MCF 10A (cell line): ENCODE measurements at regions of chr5 and their contacts with region 1.

Region 1: GRCh38 chr5:151126199-151126645 is 31.4 kb downstream of the ANXA6 start:
- DNase-seq: peak; percentile 76
- H3K4me3 Mint-ChIP-seq: no peak overlapping the region
- H3K27ac Mint-ChIP-seq: no peak overlapping the region
- H3K4me1 Mint-ChIP-seq: peaks cover 12% of the 10 kb centered on the region
- H3K27me3 Mint-ChIP-seq: peaks cover 21% of the 10 kb centered on the region
- CTCF ChIP-seq: peak; percentile 91

Region 2: GRCh38 chr5:150945947-150946346 is 180.3 kb before region 1 on chr5:
- CTCF ChIA-PET with region 1: no interaction called
- POLR2A ChIA-PET with region 1: no interaction called
- intact Hi-C with region 1: no loop called
- DNase-seq: no peak
- H3K4me3 Mint-ChIP-seq: no peak overlapping the region
- H3K27ac Mint-ChIP-seq: no peak overlapping the region
- H3K4me1 Mint-ChIP-seq: no peaks in the 10 kb centered on the region
- H3K27me3 Mint-ChIP-seq: no peaks in the 10 kb centered on the region
- CTCF ChIP-seq: no peak

Region 3: GRCh38 chr5:151002250-151002649 is 124.0 kb before region 1 on chr5:
- CTCF ChIA-PET with region 1: interaction called, 18 read pairs
- POLR2A ChIA-PET with region 1: no interaction called
- intact Hi-C with region 1: no loop called
- DNase-seq: peak; percentile 77
- H3K4me3 Mint-ChIP-seq: no peak overlapping the region
- H3K27ac Mint-ChIP-seq: no peak overlapping the region
- H3K4me1 Mint-ChIP-seq: no peaks in the 10 kb centered on the region
- H3K27me3 Mint-ChIP-seq: no peaks in the 10 kb centered on the region
- CTCF ChIP-seq: peak; percentile 79

Region 4: DNA sequence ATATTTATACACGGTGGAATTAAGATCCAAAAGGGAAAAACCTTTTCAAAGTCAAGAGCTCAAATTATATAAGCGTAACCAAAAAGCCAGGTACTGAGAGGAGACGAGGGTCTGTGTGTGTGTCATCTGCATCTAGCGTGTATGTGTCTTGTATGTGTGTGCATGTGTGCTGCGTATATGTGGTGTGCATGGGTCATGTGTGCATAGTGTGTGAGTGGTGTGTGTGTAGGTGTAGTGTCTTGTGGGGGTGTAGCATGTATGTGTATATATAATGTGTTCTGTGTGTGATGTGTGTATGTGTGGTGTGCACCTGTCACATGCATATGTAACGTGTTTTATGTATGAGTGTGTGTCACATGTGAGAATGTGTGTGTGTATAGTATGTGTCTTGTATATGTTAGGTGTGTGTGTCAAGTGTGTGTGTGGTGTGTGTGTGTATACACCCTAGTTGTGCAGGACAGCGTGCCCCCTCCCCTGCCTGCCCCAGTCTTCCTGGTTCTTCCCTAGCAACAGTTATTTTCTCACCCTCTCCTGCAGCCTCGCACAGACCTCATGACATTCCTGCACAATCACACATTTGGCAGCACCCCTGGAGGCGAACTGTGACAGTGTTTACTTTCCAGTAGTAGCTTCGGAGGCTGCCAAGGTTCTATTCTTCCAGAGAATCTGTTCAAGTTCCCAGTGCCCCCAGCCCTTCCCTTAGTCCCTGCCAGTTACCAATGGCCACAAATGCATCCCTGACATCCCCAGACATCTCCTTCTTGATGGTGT is 18.3 kb before region 1 on chr5:
- CTCF ChIA-PET with region 1: interaction called, 26 read pairs
- POLR2A ChIA-PET with region 1: no interaction called
- intact Hi-C with region 1: no loop called
- DNase-seq: peak; percentile 76
- H3K4me3 Mint-ChIP-seq: no peak overlapping the region
- H3K27ac Mint-ChIP-seq: no peak overlapping the region
- H3K4me1 Mint-ChIP-seq: peaks cover 36% of the 10 kb centered on the region
- H3K27me3 Mint-ChIP-seq: no peaks in the 10 kb centered on the region
- CTCF ChIP-seq: no peak

Region 5: GRCh38 chr5:151157426-151158286 is 31.4 kb after region 1 on chr5 and contains the start of gene ANXA6:
- CTCF ChIA-PET with region 1: interaction called, 745 read pairs
- POLR2A ChIA-PET with region 1: interaction called, 4 read pairs
- intact Hi-C with region 1: no loop called
- DNase-seq: peak; percentile 81
- H3K4me3 Mint-ChIP-seq: peak within 1 kb of the TSS; percentile 64
- H3K27ac Mint-ChIP-seq: no peak within 1 kb of the TSS
- H3K4me1 Mint-ChIP-seq: peaks cover 9% of the 10 kb centered on the region
- H3K27me3 Mint-ChIP-seq: peaks cover 37% of the 10 kb centered on the region
- CTCF ChIP-seq: no peak
- total RNA-seq, gene ANXA6: 2.6 TPM in 2 replicates

Region 6: DNA sequence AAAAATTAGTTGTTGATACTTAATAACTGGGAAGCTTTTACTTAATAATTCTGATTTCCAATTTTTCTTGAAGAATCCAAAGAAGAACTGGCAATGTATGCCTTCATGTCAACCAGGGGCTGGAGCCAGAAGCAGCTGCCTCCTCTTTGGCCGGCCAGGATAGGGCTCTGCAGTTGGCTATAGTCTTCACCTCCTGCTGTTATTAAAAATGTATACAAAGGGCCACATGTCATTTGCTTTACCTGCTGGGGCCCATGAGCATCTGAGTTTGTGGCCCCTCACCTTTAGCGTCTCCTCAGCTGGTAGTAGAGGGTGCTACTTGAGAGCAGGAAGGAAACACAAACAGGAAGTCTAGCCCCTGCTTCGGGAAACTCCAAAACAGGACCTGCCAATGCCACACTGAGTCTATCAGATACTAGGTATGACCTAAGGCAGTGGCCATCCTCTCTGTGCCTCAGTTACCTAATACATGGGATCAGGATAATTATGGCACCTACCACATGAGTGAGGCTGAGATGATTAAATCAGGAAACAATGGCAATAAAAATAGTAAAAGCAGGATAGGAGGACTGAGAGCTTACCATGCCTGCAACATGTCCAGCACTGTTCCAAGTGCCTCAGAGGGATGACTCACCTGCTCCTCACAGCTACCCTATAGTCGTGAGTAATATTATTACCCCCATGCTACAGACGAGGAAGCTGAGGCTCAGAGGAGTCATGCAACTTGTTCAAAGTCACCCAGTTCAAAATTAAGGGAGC is 76.3 kb after region 1 on chr5:
- CTCF ChIA-PET with region 1: interaction called, 13 read pairs
- POLR2A ChIA-PET with region 1: no interaction called
- intact Hi-C with region 1: no loop called
- DNase-seq: peak; percentile 99
- H3K4me3 Mint-ChIP-seq: no peak overlapping the region
- H3K27ac Mint-ChIP-seq: no peak overlapping the region
- H3K4me1 Mint-ChIP-seq: peaks cover 11% of the 10 kb centered on the region
- H3K27me3 Mint-ChIP-seq: no peaks in the 10 kb centered on the region
- CTCF ChIP-seq: no peak

Region 7: DNA sequence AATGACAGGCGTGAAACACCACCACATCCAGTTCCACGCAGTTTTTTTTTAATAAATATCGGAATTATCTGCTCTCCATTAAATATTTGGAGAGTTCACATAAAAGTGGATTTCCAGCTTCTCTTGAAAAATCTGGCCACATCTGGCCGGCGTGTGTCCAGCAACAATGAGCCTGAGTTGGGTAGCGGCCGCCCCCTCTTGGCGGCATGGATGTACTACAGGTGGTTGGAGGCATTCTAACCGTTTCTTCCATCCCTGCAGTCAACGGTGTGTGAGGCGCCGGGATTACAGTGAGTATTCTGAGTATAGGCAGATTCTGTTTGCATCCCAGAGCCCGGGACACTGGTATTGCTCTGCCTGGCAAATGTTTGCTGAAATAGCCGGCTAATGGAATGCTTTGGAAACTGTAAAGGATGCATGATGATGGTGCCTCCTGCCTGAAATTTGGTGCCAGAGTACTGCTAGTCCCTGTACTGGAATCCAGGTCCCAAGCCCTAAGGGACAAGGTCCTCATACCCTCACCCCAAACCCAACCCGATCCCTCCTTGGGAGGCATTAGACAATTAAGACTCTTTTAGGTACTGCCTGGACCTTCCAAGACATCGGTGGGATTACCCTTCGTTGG is 113.1 kb after region 1 on chr5:
- CTCF ChIA-PET with region 1: interaction called, 338 read pairs
- POLR2A ChIA-PET with region 1: interaction called, 13 read pairs
- intact Hi-C with region 1: loop called (anchors 1 kb)
- DNase-seq: peak; percentile 83
- H3K4me3 Mint-ChIP-seq: no peak overlapping the region
- H3K27ac Mint-ChIP-seq: peak overlapping the region; percentile 20
- H3K4me1 Mint-ChIP-seq: peaks cover 4% of the 10 kb centered on the region
- H3K27me3 Mint-ChIP-seq: no peaks in the 10 kb centered on the region
- CTCF ChIP-seq: peak; percentile 98

Region 8: GRCh38 chr5:151523335-151523734 is 397.1 kb after region 1 on chr5:
- CTCF ChIA-PET with region 1: interaction called, 5 read pairs
- POLR2A ChIA-PET with region 1: no interaction called
- intact Hi-C with region 1: loop called (anchors 10 kb)
- DNase-seq: peak; percentile 71
- H3K4me3 Mint-ChIP-seq: no peak overlapping the region
- H3K27ac Mint-ChIP-seq: no peak overlapping the region
- H3K4me1 Mint-ChIP-seq: peaks cover 2% of the 10 kb centered on the region
- H3K27me3 Mint-ChIP-seq: no peaks in the 10 kb centered on the region
- CTCF ChIP-seq: peak; percentile 84